Activated naive CD4-positive, alpha-beta T cell treated with anti-CD3 and anti-CD28 coated beads for 36 hours (primary cell): ENCODE measurements at regions of chr12 and their contacts with region 1.

Region 1: DNA sequence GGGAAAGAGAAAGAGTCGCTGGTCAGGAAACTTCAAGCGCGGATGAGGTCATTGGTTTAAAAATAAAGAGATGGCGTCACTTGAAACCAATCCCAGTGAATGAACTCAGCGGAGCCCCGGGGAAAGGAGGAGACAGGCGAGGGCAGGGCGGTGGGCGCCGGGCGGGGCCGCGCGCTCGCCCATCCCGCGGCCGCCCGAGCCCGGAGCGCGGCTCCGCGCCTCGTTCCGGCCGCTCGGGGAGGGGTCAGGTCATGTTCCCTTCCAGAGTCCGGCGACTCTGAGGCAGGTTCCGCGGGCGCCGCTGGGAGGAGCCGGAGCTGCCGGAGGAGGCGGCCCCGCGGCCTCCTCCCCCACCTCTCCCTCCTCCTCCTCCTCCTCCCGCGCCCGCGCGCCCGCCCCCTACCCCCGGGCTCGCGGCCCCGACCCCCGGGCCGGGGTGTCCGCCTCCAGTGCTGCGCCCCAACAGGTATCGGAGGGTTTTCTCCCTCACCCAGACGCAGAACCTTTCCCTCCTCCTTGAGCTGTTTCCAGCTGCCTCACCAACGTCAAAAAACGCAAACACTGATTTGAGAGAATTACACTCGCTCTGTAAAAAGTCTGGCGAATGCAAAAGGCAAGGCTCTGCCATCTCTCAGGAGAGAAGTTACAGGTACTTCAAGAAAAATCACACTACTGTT is at the start of gene DUSP16:
- DNase-seq: peak; percentile 85
- H3K4me3 Mint-ChIP-seq: peak within 1 kb of the TSS; percentile 78
- H3K27ac Mint-ChIP-seq: peak within 1 kb of the TSS; percentile 90
- H3K4me1 Mint-ChIP-seq: peaks cover 29% of the 10 kb centered on the region
- H3K27me3 Mint-ChIP-seq: no peaks in the 10 kb centered on the region
- total RNA-seq, gene DUSP16: 45.7 to 47.2 TPM

Region 2: DNA sequence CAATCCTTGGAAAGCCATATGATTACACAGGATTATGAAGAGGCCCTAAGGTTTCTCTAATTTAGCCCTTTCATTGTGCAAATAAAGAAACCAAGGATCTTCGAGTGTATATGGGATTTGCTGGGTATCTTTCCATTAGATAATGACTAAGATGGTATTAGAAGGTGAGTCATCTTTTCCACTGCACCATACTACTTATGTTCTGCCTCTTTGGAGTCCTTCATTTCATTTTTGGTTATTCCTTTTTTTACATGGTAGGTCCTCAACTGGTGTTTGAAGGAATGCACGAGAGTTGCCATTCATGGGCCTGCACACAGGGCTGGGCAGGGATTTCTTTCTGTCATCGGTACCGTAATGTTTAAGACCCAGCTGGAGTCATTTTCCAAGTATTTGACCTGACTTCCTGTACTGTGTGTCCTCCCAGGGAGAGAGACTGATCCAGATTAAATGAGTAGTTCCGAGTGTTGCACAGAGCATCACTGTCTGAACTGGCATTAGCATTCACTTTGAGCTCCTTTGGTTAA is 120.1 kb before region 1 on chr12:
- CTCF ChIA-PET with region 1: no interaction called
- intact Hi-C with region 1: loop called (anchors 1 kb)
- DNase-seq: no peak
- H3K4me3 Mint-ChIP-seq: peak overlapping the region; percentile 25
- H3K27ac Mint-ChIP-seq: peak overlapping the region; percentile 91
- H3K4me1 Mint-ChIP-seq: peaks cover 58% of the 10 kb centered on the region
- H3K27me3 Mint-ChIP-seq: no peaks in the 10 kb centered on the region

Region 3: DNA sequence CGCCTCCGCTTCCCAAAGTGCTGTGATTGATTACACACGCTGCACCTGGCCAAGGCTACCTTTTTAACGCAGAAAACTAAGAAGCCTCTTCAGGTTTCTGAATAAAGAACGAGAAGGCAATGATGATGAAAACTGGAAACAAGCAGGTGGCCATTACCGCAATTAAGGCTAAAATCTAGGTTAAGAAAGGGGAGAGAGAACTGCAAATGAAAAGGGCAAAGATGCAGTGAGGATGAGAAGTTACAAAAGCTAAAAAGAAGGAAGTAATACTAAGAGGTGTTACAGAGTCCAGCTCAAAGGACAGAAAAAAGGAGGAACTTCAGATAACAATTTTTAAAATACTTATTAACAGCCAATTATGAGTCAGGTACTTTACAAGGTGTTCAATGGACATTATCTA is 79.8 kb before region 1 on chr12:
- CTCF ChIA-PET with region 1: interaction called, 4 read pairs
- intact Hi-C with region 1: loop called (anchors 1 kb)
- DNase-seq: no peak
- H3K4me3 Mint-ChIP-seq: peak overlapping the region; percentile 66
- H3K27ac Mint-ChIP-seq: peak overlapping the region; percentile 92
- H3K4me1 Mint-ChIP-seq: peaks cover 65% of the 10 kb centered on the region
- H3K27me3 Mint-ChIP-seq: no peaks in the 10 kb centered on the region

Region 4: DNA sequence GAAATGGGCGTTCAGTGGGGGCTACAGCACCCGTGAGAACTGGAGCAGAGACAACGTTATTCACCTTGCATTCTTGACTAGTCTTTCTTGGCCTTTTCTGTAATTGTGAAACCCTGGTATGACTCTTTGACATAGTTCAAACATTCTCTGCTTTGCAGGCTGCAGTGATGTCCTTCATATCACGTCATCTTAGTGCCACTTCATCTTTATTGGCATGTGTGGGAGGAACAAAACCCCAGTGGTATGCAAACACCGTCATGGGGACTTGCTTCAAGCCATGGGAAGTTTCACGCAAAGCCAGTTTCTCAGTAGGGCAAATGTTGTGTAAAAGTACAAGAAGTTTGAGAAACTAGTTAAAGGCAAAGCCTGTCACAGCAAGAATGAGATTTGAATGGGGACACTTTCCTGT is 20.2 kb after region 1 on chr12:
- CTCF ChIA-PET with region 1: interaction called, 4 read pairs
- intact Hi-C with region 1: loop called (anchors 1 kb)
- DNase-seq: peak; percentile 81
- H3K4me3 Mint-ChIP-seq: peak overlapping the region; percentile 26
- H3K27ac Mint-ChIP-seq: peak overlapping the region; percentile 89
- H3K4me1 Mint-ChIP-seq: peaks cover 44% of the 10 kb centered on the region
- H3K27me3 Mint-ChIP-seq: peaks cover under 1% of the 10 kb centered on the region

Region 5: GRCh38 chr12:12600255-12601034 is 37.7 kb after region 1 on chr12:
- CTCF ChIA-PET with region 1: no interaction called
- intact Hi-C with region 1: no loop called
- DNase-seq: no peak
- H3K4me3 Mint-ChIP-seq: no peak overlapping the region
- H3K27ac Mint-ChIP-seq: no peak overlapping the region
- H3K4me1 Mint-ChIP-seq: no peaks in the 10 kb centered on the region
- H3K27me3 Mint-ChIP-seq: no peaks in the 10 kb centered on the region

Region 6: GRCh38 chr12:12696562-12697383 is 134.1 kb after region 1 on chr12:
- CTCF ChIA-PET with region 1: no interaction called
- intact Hi-C with region 1: loop called (anchors 1 kb)
- DNase-seq: peak; percentile 93
- H3K4me3 Mint-ChIP-seq: peak overlapping the region; percentile 97
- H3K27ac Mint-ChIP-seq: peak overlapping the region; percentile 98
- H3K4me1 Mint-ChIP-seq: peaks cover 38% of the 10 kb centered on the region
- H3K27me3 Mint-ChIP-seq: no peaks in the 10 kb centered on the region

Region 7: DNA sequence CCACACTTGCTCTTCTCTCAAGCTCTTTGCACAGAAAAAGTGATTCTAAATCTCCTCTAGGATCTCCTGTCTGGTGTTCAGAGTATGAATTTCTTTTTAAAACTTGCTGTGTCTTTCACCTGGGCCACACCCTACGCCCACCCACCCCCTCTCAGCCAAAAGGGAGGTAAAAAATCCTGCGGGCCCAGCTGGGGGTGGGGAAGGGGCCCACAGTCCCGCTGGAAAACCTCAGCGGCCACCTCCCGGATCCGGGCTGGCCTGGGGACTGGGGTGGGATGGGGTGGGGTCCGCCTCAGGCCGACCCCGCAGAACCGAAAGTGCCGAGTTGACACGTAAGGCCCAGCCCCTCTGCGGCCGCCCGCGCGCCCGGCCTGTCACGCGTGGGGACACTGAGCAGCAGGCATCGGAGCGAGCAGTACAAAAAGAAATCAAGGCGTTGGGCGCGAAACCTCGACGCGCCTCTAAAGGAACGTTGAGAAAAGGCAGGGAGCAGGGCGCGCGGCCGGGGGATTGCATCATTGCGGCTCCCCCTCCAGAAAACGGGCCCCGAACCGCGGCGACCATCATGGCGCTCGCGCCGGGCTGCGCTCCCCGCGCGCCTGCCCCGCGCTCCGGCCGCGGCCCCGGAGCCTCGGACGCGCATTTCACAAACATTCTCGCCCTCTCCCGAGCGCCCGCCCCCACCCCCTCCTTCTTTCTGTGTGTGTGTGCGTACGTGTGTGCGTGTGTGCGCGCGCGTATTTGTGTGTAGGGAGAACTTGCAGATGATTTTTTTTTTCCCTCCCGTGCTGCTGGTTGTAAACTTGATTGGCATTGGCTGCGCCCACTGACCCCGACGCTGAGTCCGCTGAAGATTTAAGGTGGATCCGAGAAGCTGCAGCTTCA is 162.2 kb after region 1 on chr12:
- CTCF ChIA-PET with region 1: no interaction called
- intact Hi-C with region 1: loop called (anchors 1 kb)
- DNase-seq: peak; percentile 94
- H3K4me3 Mint-ChIP-seq: peak overlapping the region; percentile 85
- H3K27ac Mint-ChIP-seq: peak overlapping the region; percentile 98
- H3K4me1 Mint-ChIP-seq: peaks cover 51% of the 10 kb centered on the region
- H3K27me3 Mint-ChIP-seq: no peaks in the 10 kb centered on the region